ENCODE measurements at regions of chr9 and their contacts with region 1.

Region 1: DNA sequence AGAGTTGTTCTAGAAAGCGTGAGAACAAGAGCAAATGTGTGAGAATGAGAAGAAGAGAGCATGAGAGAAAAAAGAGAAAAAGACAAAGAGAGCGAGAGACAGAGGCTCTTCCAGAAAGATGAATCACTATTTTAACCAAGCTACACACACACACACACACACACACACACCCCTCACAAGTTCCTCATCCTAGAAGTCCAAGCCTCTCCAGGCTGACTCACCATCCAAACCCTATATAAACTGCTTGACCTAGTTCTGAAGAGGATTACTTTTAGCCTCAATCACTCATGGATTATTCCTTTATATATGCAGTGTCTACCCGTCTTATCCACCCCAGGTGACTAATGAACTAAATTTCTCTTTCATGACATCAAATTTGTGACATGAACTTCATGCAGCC is 37.6 kb downstream of the C9orf57 start:
- DNase-seq: no peak
- H3K4me3 Mint-ChIP-seq: no peak overlapping the region
- H3K27ac Mint-ChIP-seq: no peak overlapping the region
- H3K4me1 Mint-ChIP-seq: no peaks in the 10 kb centered on the region
- H3K27me3 Mint-ChIP-seq: no peaks in the 10 kb centered on the region

Region 2: DNA sequence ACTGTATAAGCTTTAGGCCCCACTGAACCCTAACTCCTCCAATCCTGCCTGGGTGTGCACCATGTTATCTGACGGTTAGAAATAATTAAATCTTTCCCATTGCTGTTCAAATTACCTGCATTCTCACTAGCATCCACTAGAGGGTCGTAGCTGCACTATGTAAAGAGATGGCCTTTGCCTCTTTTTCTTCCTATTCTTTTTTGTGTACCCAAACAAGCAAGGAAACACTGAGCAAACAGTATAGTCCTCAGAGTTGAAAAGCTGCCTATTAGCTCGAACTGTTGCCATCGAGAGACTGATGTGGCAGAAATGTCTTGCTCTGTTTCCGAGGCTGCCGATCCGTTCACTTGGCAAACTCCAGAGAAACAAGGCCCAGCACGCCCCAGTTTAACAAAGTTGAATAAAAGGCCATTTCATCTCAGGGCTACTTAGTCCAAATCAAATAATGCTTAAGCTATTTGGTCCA is 737.6 kb before region 1 on chr9:
- CTCF ChIA-PET with region 1: interaction called, 19 read pairs
- POLR2A ChIA-PET with region 1: no interaction called
- intact Hi-C with region 1: loop called (anchors 5 kb)
- DNase-seq: peak; percentile 16
- H3K4me3 Mint-ChIP-seq: no peak overlapping the region
- H3K27ac Mint-ChIP-seq: no peak overlapping the region
- H3K4me1 Mint-ChIP-seq: no peaks in the 10 kb centered on the region
- H3K27me3 Mint-ChIP-seq: no peaks in the 10 kb centered on the region

Region 3: DNA sequence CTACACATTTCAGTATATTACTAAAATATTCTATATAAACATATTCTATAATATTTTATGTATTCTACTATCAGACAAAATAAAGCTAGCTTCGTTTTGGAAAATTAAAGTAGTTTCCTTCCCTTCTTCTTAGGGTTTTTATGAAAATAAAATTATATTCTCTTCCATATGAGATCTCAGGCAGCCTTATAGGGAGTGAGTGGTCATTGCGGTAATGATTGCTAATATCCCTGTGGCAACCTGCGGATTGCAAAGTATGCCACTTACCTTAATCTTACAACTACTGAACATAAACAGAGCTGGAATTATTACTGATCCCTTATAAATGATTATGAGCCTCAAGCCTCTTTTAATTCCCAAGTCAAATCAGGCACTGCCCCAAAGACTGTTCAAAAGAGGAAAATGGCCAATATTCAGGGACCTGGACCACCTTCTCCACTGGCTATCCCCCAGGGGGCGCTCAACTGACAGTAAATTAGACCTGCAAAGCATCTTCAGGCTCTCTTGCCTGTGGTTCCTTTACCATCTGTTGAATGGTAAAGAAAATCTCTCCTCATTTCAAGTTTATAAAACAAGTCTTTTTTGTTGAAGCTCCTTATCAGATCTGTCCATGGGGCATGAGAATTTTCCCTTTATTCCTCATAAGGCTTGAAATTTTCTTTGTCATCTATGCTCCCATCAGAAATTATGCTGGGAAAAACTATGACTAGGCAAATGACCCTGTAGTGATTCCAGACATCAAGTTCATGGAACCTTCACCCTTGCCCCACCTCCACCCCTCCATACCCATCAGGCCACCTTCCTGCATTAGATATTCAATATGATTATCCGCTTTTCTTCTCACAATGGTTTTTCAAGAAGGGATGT is 418.4 kb before region 1 on chr9:
- CTCF ChIA-PET with region 1: interaction called, 14 read pairs
- POLR2A ChIA-PET with region 1: no interaction called
- intact Hi-C with region 1: loop called (anchors 2 kb)
- DNase-seq: peak; percentile 84
- H3K4me3 Mint-ChIP-seq: no peak overlapping the region
- H3K27ac Mint-ChIP-seq: no peak overlapping the region
- H3K4me1 Mint-ChIP-seq: no peaks in the 10 kb centered on the region
- H3K27me3 Mint-ChIP-seq: no peaks in the 10 kb centered on the region

Region 4: DNA sequence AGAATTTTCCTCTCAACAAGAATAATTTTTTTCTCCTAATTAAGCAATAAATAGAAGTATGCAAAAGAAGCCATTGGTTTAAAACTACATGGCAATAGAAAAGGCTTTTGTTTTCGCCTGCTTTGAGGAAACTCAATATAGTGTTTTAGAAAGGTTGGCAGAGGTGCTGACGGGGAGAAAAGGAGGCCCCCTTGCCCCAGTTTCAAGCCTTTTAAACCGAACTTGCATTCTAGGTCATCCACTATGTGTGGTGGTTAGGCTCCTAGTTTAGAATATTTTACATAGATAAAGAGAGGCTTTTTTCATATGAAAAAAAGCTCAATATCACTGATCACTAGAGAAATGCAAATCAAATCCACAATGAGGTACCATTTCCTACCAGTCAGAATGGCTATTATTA is 221.0 kb before region 1 on chr9:
- CTCF ChIA-PET with region 1: interaction called, 186 read pairs
- POLR2A ChIA-PET with region 1: no interaction called
- intact Hi-C with region 1: loop called (anchors 1 kb)
- DNase-seq: no peak
- H3K4me3 Mint-ChIP-seq: no peak overlapping the region
- H3K27ac Mint-ChIP-seq: no peak overlapping the region
- H3K4me1 Mint-ChIP-seq: peaks cover 7% of the 10 kb centered on the region
- H3K27me3 Mint-ChIP-seq: no peaks in the 10 kb centered on the region

Region 5: GRCh38 chr9:71806901-71807307 is 215.9 kb before region 1 on chr9:
- CTCF ChIA-PET with region 1: interaction called, 186 read pairs
- POLR2A ChIA-PET with region 1: no interaction called
- intact Hi-C with region 1: loop called (anchors 1 kb)
- DNase-seq: peak; percentile 69
- H3K4me3 Mint-ChIP-seq: no peak overlapping the region
- H3K27ac Mint-ChIP-seq: no peak overlapping the region
- H3K4me1 Mint-ChIP-seq: peaks cover 5% of the 10 kb centered on the region
- H3K27me3 Mint-ChIP-seq: no peaks in the 10 kb centered on the region

Region 6: DNA sequence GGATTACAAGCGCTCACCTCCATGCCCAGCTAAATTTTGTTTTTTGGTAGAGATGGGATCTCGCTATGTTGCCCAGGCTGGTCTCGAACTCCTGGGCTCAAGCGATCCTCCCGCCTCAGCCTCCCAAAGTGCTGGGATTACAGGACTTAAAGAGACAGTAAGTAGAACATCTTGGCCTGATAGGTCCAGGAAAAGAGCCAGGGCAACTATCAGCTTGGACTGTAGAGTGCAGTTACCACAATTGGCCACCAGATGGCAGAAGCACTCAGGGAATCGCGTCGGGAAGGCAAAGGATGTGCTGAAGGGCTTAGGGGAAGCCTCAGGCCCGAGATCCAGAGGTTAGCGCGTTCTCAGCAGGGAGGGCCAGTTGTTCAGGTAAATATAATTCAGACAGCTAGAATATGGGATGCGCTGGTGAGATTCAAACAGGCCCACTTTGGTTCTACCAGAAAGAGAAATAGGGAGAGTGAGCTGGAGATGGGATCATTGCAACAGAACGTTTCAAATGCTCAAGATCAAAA is 16.1 kb after region 1 on chr9:
- CTCF ChIA-PET with region 1: interaction called, 38 read pairs
- POLR2A ChIA-PET with region 1: no interaction called
- intact Hi-C with region 1: no loop called
- DNase-seq: peak; percentile 80
- H3K4me3 Mint-ChIP-seq: no peak overlapping the region
- H3K27ac Mint-ChIP-seq: no peak overlapping the region
- H3K4me1 Mint-ChIP-seq: peaks cover 5% of the 10 kb centered on the region
- H3K27me3 Mint-ChIP-seq: peaks cover 4% of the 10 kb centered on the region

Measured in activated CD4-positive, alpha-beta memory T cell treated with anti-CD3 and anti-CD28 coated beads for 36 hours (primary cell).